Naive thymus-derived CD4-positive, alpha-beta T cell (primary cell): ENCODE measurements at regions of chr11 and their contacts with region 1.

Region 1: GRCh38 chr11:121591405-121592033 is 138.8 kb upstream of the SORL1-AS1 start:
- DNase-seq: peak in 8 of 9 donors; percentile 56 to 81 (median 74)
- ATAC-seq: peak; percentile 88
- H3K4me3 ChIP-seq: no peak overlapping the region
- H3K4me3 Mint-ChIP-seq: no peak overlapping the region
- H3K27ac ChIP-seq: no peak overlapping the region
- H3K27ac Mint-ChIP-seq: peak overlapping the region in 7 of 9 donors; percentile 44 to 89 (median 70)
- H3K4me1 ChIP-seq: no peaks in the 10 kb centered on the region
- H3K4me1 Mint-ChIP-seq: peaks cover 9 to 29% (median 14%) of the 10 kb centered on the region in 7 donors
- H3K27me3 ChIP-seq: no peaks in the 10 kb centered on the region
- H3K27me3 Mint-ChIP-seq: no peaks in the 10 kb centered on the region

Region 2: GRCh38 chr11:121426476-121427399 is 164.8 kb before region 1 on chr11:
- CTCF ChIA-PET with region 1: no interaction called
- POLR2A ChIA-PET with region 1: no interaction called
- intact Hi-C with region 1: no loop called
- DNase-seq: peak in 6 of 9 donors; percentile 30 to 56 (median 36)
- ATAC-seq: peak; percentile 79
- H3K4me3 ChIP-seq: peak overlapping the region; percentile 44
- H3K4me3 Mint-ChIP-seq: peak overlapping the region; percentile 67 to 86 (median 78)
- H3K27ac ChIP-seq: peak overlapping the region; percentile 37
- H3K27ac Mint-ChIP-seq: peak overlapping the region; percentile 5 to 89 (median 43)
- H3K4me1 ChIP-seq: peaks cover 0 to 27% of the 10 kb centered on the region in 2 donors
- H3K4me1 Mint-ChIP-seq: peaks cover 34 to 70% (median 54%) of the 10 kb centered on the region in 7 donors
- H3K27me3 ChIP-seq: no peaks in the 10 kb centered on the region
- H3K27me3 Mint-ChIP-seq: peaks cover 0 to 3% (median 0%) of the 10 kb centered on the region in 5 donors

Region 3: GRCh38 chr11:121604152-121604551 is 12.6 kb after region 1 on chr11:
- CTCF ChIA-PET with region 1: interaction called, 3 read pairs
- POLR2A ChIA-PET with region 1: interaction called, 3 read pairs
- intact Hi-C with region 1: loop called in 1 of 2 experiments (anchors 2 kb)
- DNase-seq: no peak
- ATAC-seq: no peak
- H3K4me3 ChIP-seq: no peak overlapping the region
- H3K4me3 Mint-ChIP-seq: no peak overlapping the region
- H3K27ac ChIP-seq: no peak overlapping the region
- H3K27ac Mint-ChIP-seq: peak overlapping the region in 3 of 9 donors; percentile 24 to 46 (median 25)
- H3K4me1 ChIP-seq: no peaks in the 10 kb centered on the region
- H3K4me1 Mint-ChIP-seq: peaks cover 0 to 9% (median 6%) of the 10 kb centered on the region in 7 donors
- H3K27me3 ChIP-seq: no peaks in the 10 kb centered on the region
- H3K27me3 Mint-ChIP-seq: no peaks in the 10 kb centered on the region

Region 4: DNA sequence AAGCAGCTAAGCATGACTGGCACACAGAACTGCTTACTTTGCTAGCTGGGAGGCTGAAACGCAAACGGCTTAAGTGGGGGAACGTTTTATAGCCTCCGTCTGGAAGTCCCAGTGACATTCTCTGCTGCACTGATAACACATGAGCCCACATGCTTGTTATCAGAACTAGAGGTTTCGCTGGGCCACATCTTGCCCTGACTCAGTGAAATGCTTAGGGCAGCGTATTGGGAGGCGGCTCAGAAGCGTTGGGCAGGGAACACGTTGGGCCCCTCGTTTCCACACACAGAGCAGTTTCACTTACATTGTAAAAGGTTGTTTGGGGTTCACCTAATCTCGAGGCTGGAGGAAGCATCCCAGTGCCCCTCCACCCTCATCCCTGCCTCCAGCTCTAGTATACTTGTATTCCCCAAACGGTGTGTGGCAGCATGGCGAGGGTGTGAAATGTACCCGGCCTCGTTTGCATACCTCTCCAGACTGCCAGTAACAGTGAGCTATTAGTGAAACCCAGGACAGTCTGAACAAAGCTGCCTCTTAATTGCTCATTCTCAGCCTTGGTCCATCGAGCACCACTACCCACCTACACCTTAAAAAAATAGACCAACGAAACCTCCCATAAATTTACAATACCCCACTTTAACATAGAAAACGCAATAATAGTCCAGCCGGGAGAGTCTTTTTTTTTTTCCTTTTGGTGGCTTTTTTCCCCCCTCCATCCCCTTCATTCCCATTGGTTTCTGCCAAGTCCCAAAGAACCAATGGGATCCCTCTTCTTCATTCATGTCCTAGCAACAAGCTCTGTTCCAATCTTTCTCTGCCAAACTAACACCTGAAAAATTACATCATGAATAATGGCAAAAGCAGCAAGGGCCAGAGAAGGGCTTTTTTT is 80.0 kb after region 1 on chr11:
- CTCF ChIA-PET with region 1: no interaction called
- POLR2A ChIA-PET with region 1: no interaction called
- intact Hi-C with region 1: no loop called
- DNase-seq: no peak
- ATAC-seq: no peak
- H3K4me3 ChIP-seq: no peak overlapping the region
- H3K4me3 Mint-ChIP-seq: no peak overlapping the region
- H3K27ac ChIP-seq: no peak overlapping the region
- H3K27ac Mint-ChIP-seq: no peak overlapping the region
- H3K4me1 ChIP-seq: no peaks in the 10 kb centered on the region
- H3K4me1 Mint-ChIP-seq: peaks cover 0 to 2% (median 0%) of the 10 kb centered on the region in 7 donors
- H3K27me3 ChIP-seq: no peaks in the 10 kb centered on the region
- H3K27me3 Mint-ChIP-seq: no peaks in the 10 kb centered on the region

Region 5: DNA sequence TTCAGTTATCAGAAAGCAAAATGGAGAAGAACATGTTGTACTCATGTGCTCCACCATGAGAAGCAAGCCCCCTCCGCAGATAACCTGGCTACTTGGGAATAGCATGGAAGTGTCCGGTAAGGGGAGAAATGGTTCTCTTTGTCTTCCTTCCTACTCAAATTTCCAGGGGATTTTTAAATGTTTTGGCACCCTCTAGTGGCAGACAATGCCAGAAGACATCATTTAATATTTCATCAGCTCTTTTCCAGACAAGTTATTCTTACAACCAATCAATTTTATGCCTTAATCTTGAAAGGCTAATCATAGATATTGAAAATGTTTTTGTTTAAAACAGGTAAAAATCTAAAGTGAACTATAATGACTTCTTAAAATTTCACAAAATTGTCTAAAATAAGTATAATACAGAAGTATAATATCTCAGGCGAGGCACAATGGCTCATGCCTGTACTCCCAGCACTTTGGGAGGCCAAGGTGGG is 1262.5 kb after region 1 on chr11:
- CTCF ChIA-PET with region 1: no interaction called
- POLR2A ChIA-PET with region 1: no interaction called
- intact Hi-C with region 1: no loop called
- DNase-seq: peak in 8 of 9 donors; percentile 27 to 70 (median 63)
- ATAC-seq: no peak
- H3K4me3 ChIP-seq: no peak overlapping the region
- H3K4me3 Mint-ChIP-seq: peak overlapping the region in 3 of 10 donors; percentile 31 to 33 (median 32)
- H3K27ac ChIP-seq: no peak overlapping the region
- H3K27ac Mint-ChIP-seq: peak overlapping the region in 5 of 9 donors; percentile 28 to 67 (median 49)
- H3K4me1 ChIP-seq: peaks cover 21 to 42% of the 10 kb centered on the region in 2 donors
- H3K4me1 Mint-ChIP-seq: peaks cover 25 to 44% (median 32%) of the 10 kb centered on the region in 7 donors
- H3K27me3 ChIP-seq: no peaks in the 10 kb centered on the region
- H3K27me3 Mint-ChIP-seq: peaks cover 0 to 11% (median 0%) of the 10 kb centered on the region in 5 donors